ENCODE measurements at regions of chr9 and their contacts with region 1.

Region 1: DNA sequence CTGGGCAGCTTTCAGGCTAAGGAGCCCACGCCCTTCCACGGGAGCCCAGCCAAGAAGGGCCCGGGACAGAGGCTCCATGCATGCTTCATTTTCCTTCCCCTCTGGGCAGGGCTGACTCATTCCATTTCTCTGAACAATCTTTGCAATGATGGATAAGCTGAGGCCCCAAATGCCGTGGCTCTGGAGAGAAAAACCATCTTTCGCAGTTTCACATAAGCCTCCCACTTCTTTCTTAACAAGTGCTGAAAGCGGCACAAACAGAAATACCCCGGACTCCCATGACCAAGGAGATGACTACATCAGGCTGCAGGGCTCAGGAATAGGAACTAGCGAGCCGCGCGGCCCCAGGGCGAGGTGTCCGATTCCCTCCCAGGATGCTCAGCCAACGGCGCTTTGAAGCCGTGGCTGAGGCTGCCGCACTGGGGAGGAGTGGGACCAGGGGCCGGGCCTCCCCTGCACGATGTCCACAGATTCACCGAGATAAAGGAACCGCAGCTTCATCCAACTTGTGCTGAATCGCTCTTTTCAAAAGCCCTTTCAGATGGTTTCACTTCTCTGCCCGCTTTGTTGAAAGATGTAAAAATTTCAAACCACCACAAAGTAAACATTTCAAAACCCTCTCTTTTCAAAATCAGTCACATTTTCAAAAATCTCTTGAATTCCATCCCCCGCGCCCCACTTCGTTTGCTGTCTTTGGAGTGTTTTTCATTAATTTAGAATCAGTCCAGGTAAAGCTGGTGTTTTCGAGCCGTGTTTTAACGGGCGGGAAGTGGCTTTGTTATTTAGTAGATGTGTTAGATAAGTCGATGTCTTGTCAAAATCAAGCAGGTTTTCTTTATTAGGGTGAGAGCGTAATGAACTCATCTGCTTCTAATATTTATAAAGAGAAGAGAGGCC is 96.5 kb upstream of the LMX1B start:
- DNase-seq: no peak

Region 2: GRCh38 chr9:126558051-126558665 is 41.0 kb after region 1 on chr9:
- intact Hi-C with region 1: loop called (anchors 5 kb)
- DNase-seq: peak; percentile 85

Region 3: DNA sequence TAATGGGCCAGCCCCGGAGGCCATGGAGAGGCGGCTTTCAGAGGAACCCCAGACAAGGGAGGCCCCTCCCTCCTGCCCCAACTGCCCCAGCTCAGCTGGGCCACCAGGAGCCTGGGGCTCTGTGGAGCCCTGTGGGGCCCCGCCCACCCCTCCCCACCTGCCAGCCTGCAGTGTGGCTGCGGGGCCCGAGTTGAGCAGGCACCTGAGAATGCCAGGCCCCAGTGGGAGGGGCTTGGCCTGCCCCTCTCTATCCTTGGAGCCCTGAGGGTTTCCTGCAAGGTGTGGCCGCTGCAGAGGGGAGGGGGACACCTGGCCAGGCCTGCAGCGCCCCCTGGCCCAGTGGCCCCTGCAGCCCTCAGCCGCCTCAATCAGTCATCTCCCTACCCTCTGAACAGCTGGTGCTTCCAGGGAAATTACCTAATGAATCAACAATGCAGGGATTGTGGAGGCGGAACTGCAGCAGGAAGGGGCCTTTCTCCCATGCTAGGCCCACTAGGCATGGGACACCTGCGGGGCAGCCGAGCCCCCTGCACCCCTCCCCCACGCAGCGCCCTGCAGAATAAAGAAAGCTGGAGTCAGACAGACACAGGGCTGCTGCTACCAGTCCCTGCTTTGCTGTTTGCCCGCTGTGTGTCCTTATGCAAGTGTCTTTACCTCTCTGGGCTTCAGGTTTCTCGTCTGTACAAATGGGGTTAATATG is 144.5 kb after region 1 on chr9:
- intact Hi-C with region 1: no loop called
- DNase-seq: no peak

Region 4: GRCh38 chr9:126690431-126691350 is 173.5 kb after region 1 on chr9:
- intact Hi-C with region 1: no loop called
- DNase-seq: no peak

Region 5: DNA sequence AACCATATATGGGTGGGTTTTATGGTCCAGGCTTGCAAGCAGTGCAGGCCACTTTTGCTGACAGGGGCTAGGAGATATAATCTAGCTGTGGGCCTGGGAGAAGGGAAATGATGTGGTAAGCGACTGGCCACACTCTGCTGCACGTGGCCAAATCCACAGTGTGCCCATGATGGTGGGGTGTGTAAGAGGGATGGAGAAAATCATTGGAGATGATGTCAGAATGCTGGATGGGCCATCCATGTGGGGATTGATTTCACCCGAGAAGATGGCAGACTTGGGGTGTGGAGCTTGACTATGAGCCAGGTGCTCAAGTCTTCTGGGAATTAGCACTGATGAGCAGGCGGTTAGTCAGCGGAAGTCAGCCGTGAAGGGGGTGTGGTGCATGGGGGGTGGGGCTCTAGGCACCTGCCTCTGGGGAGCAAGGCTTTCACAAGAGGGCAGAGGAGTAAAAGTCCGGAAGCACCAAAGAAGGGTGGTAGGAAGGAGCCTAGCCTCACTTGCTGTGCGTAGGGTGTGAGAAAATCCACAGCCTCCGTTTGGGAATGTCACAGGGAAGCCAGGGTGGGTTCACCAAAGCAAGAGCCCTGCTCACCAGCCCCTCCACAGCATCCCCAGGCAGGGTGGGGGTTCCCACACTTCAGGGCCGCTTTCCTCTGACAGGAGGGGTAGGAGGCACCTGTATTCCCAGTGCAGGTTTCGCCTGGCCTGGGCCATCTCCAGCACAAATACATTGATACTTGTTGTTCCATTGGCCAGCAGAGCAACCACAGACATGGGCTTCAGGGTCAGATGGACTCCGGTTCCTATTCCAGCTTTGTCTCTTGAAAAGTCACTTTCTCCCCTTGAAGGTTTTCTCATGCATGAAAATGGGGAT is 649.7 kb after region 1 on chr9:
- intact Hi-C with region 1: no loop called
- DNase-seq: no peak